ENCODE measurements at regions of chr1 and their contacts with region 1.

Region 1: GRCh38 chr1:229843627-229844238 is 217.7 kb downstream of the URB2 start:
- DNase-seq: peak; percentile 61 to 85
- ATAC-seq: peak; percentile 96
- H3K4me3 ChIP-seq: no peak overlapping the region
- H3K27ac ChIP-seq: peak overlapping the region; percentile 89
- H3K4me1 ChIP-seq: peaks cover 20% of the 10 kb centered on the region
- H3K27me3 ChIP-seq: no peaks in the 10 kb centered on the region
- CTCF ChIP-seq: peak; percentile 54

Region 2: GRCh38 chr1:229661022-229661877 is 182.5 kb before region 1 on chr1:
- intact Hi-C with region 1: loop called in 1 of 2 experiments (anchors 5 kb)
- DNase-seq: peak; percentile 79 to 86
- ATAC-seq: peak; percentile 88 to 96 (median 94)
- H3K4me3 ChIP-seq: no peak overlapping the region
- H3K27ac ChIP-seq: no peak overlapping the region
- H3K4me1 ChIP-seq: no peaks in the 10 kb centered on the region
- H3K27me3 ChIP-seq: no peaks in the 10 kb centered on the region
- CTCF ChIP-seq: peak; percentile 87

Region 3: GRCh38 chr1:229862017-229862774 is 18.5 kb after region 1 on chr1:
- intact Hi-C with region 1: loop called in 1 of 2 experiments (anchors 1 kb)
- DNase-seq: no peak
- ATAC-seq: no peak
- H3K4me3 ChIP-seq: no peak overlapping the region
- H3K27ac ChIP-seq: peak overlapping the region; percentile 91
- H3K4me1 ChIP-seq: peaks cover 41% of the 10 kb centered on the region
- H3K27me3 ChIP-seq: no peaks in the 10 kb centered on the region
- CTCF ChIP-seq: no peak

Region 4: GRCh38 chr1:229887043-229887822 is 43.5 kb after region 1 on chr1:
- intact Hi-C with region 1: loop called in 1 of 2 experiments (anchors 2 kb)
- DNase-seq: no peak
- ATAC-seq: peak; percentile 86 to 88 (median 86)
- H3K4me3 ChIP-seq: no peak overlapping the region
- H3K27ac ChIP-seq: peak overlapping the region; percentile 98
- H3K4me1 ChIP-seq: peaks cover 36% of the 10 kb centered on the region
- H3K27me3 ChIP-seq: no peaks in the 10 kb centered on the region
- CTCF ChIP-seq: no peak

Measured in psoas muscle (tissue), 8 donors.